ENCODE measurements at regions of chr3 and their contacts with region 1.

Region 1: GRCh38 chr3:58532794-58533220 is 4.2 kb downstream of the ACOX2 start:
- DNase-seq: peak; percentile 90
- H3K4me3 Mint-ChIP-seq: no peak overlapping the region
- H3K27ac Mint-ChIP-seq: peak overlapping the region; percentile 15
- H3K4me1 Mint-ChIP-seq: peaks cover 10% of the 10 kb centered on the region
- H3K27me3 Mint-ChIP-seq: no peaks in the 10 kb centered on the region

Region 2: DNA sequence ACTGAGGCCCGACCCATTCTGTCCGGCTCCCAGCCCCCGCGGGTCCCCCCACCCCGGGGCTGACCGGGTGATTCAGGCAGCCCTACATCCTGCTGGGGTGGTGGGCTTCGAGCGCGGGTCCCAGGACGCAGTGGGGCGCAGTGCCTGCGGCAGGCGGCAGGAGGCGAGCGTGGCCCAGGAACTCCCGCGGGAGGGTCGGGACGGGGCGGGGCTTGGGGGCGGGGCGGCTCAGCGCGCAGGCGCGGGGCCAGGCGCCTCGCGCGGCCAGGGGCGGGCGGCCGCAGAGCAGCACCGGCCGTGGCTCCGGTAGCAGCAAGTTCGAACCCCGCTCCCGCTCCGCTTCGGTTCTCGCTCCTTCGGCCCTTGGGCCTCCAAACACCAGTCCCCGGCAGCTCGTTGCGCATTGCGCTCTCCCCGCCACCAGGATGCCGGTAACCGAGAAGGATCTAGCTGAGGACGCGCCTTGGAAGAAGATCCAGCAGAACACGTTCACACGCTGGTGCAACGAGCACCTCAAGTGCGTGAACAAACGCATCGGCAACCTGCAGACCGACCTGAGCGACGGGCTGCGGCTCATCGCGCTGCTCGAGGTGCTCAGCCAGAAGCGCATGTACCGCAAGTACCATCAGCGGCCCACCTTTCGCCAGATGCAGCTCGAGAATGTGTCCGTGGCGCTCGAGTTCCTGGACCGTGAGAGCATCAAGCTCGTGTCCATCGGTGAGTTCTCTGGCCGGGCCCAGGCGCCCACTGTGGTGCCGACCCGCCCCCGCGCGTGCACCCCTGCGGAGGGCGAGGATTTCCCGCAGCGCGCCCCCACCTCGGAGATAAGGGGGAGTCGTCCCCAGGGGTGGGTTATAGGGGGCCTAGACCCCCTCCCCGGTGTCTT is 524.4 kb before region 1 on chr3 and contains the start of gene FLNB:
- CTCF ChIA-PET with region 1: no interaction called
- intact Hi-C with region 1: loop called (anchors 5 kb)
- DNase-seq: peak; percentile 81
- H3K4me3 Mint-ChIP-seq: peak within 1 kb of the TSS; percentile 92
- H3K27ac Mint-ChIP-seq: peak within 1 kb of the TSS; percentile 74
- H3K4me1 Mint-ChIP-seq: peaks cover 37% of the 10 kb centered on the region
- H3K27me3 Mint-ChIP-seq: no peaks in the 10 kb centered on the region
- total RNA-seq, gene FLNB: 47.7 to 48.0 TPM

Region 3: DNA sequence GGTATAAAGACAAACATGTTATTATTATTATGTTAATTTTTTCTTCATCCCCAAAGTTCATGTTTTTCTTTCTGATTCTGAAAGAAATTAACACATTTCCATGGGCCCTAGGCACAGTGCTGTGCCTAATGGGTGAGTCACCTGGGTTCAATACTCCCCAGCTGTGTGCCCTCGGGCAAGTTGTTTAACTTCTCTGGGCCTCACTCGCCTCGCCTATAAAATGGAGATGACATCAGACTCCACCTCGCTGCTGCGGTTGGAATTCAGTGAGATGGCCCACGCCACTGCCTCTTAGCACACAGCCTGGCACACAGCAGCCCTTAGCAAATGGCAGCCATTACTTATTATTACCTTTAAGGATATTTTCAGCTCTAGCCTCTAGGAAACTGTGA is 344.6 kb before region 1 on chr3:
- CTCF ChIA-PET with region 1: no interaction called
- intact Hi-C with region 1: loop called (anchors 2 kb)
- DNase-seq: no peak
- H3K4me3 Mint-ChIP-seq: no peak overlapping the region
- H3K27ac Mint-ChIP-seq: no peak overlapping the region
- H3K4me1 Mint-ChIP-seq: no peaks in the 10 kb centered on the region
- H3K27me3 Mint-ChIP-seq: no peaks in the 10 kb centered on the region

Region 4: GRCh38 chr3:58222094-58222724 is 310.6 kb before region 1 on chr3:
- CTCF ChIA-PET with region 1: no interaction called
- intact Hi-C with region 1: no loop called
- DNase-seq: no peak
- H3K4me3 Mint-ChIP-seq: no peak overlapping the region
- H3K27ac Mint-ChIP-seq: no peak overlapping the region
- H3K4me1 Mint-ChIP-seq: peaks cover 10% of the 10 kb centered on the region
- H3K27me3 Mint-ChIP-seq: no peaks in the 10 kb centered on the region

Region 5: GRCh38 chr3:58324391-58325390 is 208.1 kb before region 1 on chr3:
- CTCF ChIA-PET with region 1: interaction called, 8 read pairs
- intact Hi-C with region 1: loop called (anchors 1 kb)
- DNase-seq: peak; percentile 21
- H3K4me3 Mint-ChIP-seq: peak overlapping the region; percentile 16
- H3K27ac Mint-ChIP-seq: peak overlapping the region; percentile 89
- H3K4me1 Mint-ChIP-seq: peaks cover 42% of the 10 kb centered on the region
- H3K27me3 Mint-ChIP-seq: no peaks in the 10 kb centered on the region

Region 6: GRCh38 chr3:58414538-58415197 is 118.1 kb before region 1 on chr3:
- CTCF ChIA-PET with region 1: interaction called, 9 read pairs
- intact Hi-C with region 1: loop called (anchors 1 kb)
- DNase-seq: peak; percentile 68
- H3K4me3 Mint-ChIP-seq: no peak overlapping the region
- H3K27ac Mint-ChIP-seq: no peak overlapping the region
- H3K4me1 Mint-ChIP-seq: peaks cover 6% of the 10 kb centered on the region
- H3K27me3 Mint-ChIP-seq: no peaks in the 10 kb centered on the region

Region 7: DNA sequence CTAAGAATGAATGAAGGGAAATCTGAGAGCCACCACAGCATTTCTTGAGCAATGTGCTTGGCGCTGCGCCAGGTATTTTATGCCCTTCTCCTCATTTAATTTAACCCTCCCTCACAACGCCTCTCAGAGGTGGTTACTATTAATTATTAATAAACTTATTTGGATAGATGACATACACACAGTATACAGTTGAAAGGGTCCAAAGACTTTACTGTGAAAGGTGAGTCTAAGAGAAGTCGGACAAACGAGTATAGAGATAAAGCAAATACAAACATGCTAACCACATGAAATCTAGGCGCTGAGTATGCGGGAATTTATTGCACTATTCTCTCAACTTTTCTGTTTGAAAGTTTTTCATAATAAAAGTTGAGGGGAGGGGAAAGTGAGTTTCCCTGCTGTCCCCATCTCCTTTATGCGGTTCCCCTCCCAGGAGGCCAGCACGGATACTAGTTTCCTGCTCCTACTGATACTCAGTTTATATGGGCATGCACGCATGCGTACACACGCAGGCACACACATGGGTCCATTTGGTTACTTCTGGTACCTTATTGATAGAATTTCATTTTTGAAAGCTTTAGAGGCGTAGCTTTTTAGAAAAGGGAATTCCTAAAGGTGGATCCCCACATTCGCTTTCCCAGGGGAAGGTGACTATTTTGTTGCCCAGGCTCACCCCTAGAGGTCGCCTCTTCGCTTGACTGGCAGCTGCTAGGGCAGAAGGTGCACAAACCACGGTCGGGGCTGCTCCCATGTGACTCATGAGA is 69.4 kb before region 1 on chr3:
- CTCF ChIA-PET with region 1: interaction called, 6 read pairs
- intact Hi-C with region 1: loop called (anchors 1 kb)
- DNase-seq: peak; percentile 92
- H3K4me3 Mint-ChIP-seq: peak overlapping the region; percentile 16
- H3K27ac Mint-ChIP-seq: peak overlapping the region; percentile 61
- H3K4me1 Mint-ChIP-seq: peaks cover 15% of the 10 kb centered on the region
- H3K27me3 Mint-ChIP-seq: peaks cover 3% of the 10 kb centered on the region

Region 8: GRCh38 chr3:58518291-58518789 is 14.5 kb before region 1 on chr3:
- CTCF ChIA-PET with region 1: interaction called, 15 read pairs
- intact Hi-C with region 1: no loop called
- DNase-seq: no peak
- H3K4me3 Mint-ChIP-seq: no peak overlapping the region
- H3K27ac Mint-ChIP-seq: no peak overlapping the region
- H3K4me1 Mint-ChIP-seq: no peaks in the 10 kb centered on the region
- H3K27me3 Mint-ChIP-seq: no peaks in the 10 kb centered on the region